Caco-2 (cell line): ENCODE measurements at regions of chr11 and their contacts with region 1.

Region 1: GRCh38 chr11:87097582-87097981 is 59.8 kb downstream of the TMEM135 start:
- DNase-seq: peak; percentile 87
- H3K4me3 ChIP-seq: no peak overlapping the region
- H3K4me3 Mint-ChIP-seq: no peak overlapping the region
- H3K27ac Mint-ChIP-seq: peak overlapping the region; percentile 26
- H3K4me1 ChIP-seq: peaks cover 12% of the 10 kb centered on the region
- H3K4me1 Mint-ChIP-seq: peaks cover 10% of the 10 kb centered on the region
- H3K27me3 ChIP-seq: no peaks in the 10 kb centered on the region
- H3K27me3 Mint-ChIP-seq: no peaks in the 10 kb centered on the region
- CTCF ChIP-seq: peak; percentile 96 to 98

Region 2: DNA sequence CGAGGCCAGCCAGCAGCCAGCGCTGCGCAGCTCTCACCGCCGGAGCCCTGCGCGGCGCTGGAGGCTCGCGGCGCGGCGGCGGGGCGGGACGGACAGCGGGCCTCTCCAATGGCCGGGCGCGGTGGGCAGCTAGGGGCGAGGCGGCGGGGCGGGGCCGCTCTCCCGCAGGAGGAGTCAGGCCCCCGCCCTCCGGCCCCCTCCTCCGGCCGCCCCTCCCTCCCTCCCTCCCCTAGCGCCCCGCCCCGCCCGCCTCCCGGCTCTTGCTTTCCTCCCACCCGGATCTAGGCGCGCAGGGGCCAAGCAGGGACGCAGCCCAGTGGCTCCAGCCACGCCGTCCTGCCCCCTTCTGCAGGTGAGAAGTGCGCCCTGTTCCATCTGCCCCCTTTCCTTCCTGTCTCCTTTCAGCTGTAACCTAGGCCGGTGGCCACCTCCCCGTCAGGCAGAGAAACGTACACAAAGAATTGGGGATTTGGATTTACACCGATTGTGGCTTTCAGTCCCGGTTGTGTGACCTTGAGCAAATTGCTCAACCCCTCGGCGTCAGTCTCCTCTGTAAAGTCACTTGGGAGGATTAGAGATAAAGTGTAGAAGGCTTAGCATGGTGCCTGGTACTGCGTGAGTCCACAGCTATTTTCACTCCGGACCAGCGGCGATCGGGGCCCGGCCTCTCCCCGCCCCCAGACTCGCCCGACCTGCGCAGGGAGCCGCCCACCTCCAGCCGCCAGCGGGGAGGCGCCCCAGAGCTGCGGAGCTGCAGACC is 142.0 kb before region 1 on chr11 and contains the start of gene FZD4:
- CTCF ChIA-PET with region 1: interaction called, 21 read pairs
- POLR2A ChIA-PET with region 1: no interaction called
- intact Hi-C with region 1: loop called (anchors 2 kb)
- DNase-seq: peak; percentile 96 to 99
- H3K4me3 ChIP-seq: peak within 1 kb of the TSS; percentile 94
- H3K4me3 Mint-ChIP-seq: peak within 1 kb of the TSS; percentile 93
- H3K27ac Mint-ChIP-seq: peak within 1 kb of the TSS; percentile 90
- H3K4me1 ChIP-seq: peaks cover 15% of the 10 kb centered on the region
- H3K4me1 Mint-ChIP-seq: peaks cover 22% of the 10 kb centered on the region
- H3K27me3 ChIP-seq: no peaks in the 10 kb centered on the region
- H3K27me3 Mint-ChIP-seq: no peaks in the 10 kb centered on the region
- CTCF ChIP-seq: peak; percentile 5 to 64
- total RNA-seq, gene FZD4: 60.6 and 78.4 TPM in 2 replicates

Region 3: GRCh38 chr11:86990515-86990914 is 107.1 kb before region 1 on chr11:
- CTCF ChIA-PET with region 1: interaction called, 17 read pairs
- POLR2A ChIA-PET with region 1: no interaction called
- intact Hi-C with region 1: loop called (anchors 1 kb)
- DNase-seq: peak; percentile 58 to 70
- H3K4me3 ChIP-seq: no peak overlapping the region
- H3K4me3 Mint-ChIP-seq: no peak overlapping the region
- H3K27ac Mint-ChIP-seq: peak overlapping the region; percentile 8
- H3K4me1 ChIP-seq: peaks cover 28% of the 10 kb centered on the region
- H3K4me1 Mint-ChIP-seq: peaks cover 37% of the 10 kb centered on the region
- H3K27me3 ChIP-seq: no peaks in the 10 kb centered on the region
- H3K27me3 Mint-ChIP-seq: no peaks in the 10 kb centered on the region
- CTCF ChIP-seq: no peak

Region 4: GRCh38 chr11:87037450-87038234 is 59.9 kb before region 1 on chr11 and contains the start of gene TMEM135:
- CTCF ChIA-PET with region 1: interaction called, 33 read pairs
- POLR2A ChIA-PET with region 1: interaction called, 9 read pairs
- intact Hi-C with region 1: loop called (anchors 2 kb)
- DNase-seq: peak; percentile 99 to 100
- H3K4me3 ChIP-seq: peak within 1 kb of the TSS; percentile 83
- H3K4me3 Mint-ChIP-seq: peak within 1 kb of the TSS; percentile 97
- H3K27ac Mint-ChIP-seq: peak within 1 kb of the TSS; percentile 81
- H3K4me1 ChIP-seq: peaks cover 11% of the 10 kb centered on the region
- H3K4me1 Mint-ChIP-seq: peaks cover 59% of the 10 kb centered on the region
- H3K27me3 ChIP-seq: no peaks in the 10 kb centered on the region
- H3K27me3 Mint-ChIP-seq: no peaks in the 10 kb centered on the region
- CTCF ChIP-seq: peak in 1 of 2 experiments; percentile 62
- total RNA-seq, gene TMEM135: 88.6 and 95.2 TPM in 2 replicates

Region 5: DNA sequence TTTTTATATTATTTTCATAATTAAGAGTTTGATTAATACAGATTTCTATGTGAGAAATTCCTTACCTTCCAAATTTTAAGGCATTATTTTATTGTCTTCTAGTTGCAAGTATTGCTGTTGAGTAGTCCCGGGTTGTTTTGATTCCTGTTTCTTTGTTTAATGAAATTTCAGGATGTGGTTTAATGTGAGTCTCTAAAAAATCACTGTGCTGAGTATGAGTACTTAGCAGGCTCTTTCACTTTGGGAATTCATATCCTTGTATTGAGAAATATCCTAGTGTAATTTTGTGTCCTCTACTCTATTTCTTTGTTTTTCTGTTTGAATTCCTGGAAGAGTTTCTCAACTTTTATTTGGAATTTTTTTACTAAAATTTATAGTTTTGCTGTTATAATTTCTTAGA is 53.4 kb after region 1 on chr11:
- CTCF ChIA-PET with region 1: no interaction called
- POLR2A ChIA-PET with region 1: no interaction called
- intact Hi-C with region 1: loop called (anchors 2 kb)
- DNase-seq: no peak
- H3K4me3 ChIP-seq: no peak overlapping the region
- H3K4me3 Mint-ChIP-seq: no peak overlapping the region
- H3K27ac Mint-ChIP-seq: no peak overlapping the region
- H3K4me1 ChIP-seq: peaks cover 9% of the 10 kb centered on the region
- H3K4me1 Mint-ChIP-seq: peaks cover 29% of the 10 kb centered on the region
- H3K27me3 ChIP-seq: no peaks in the 10 kb centered on the region
- H3K27me3 Mint-ChIP-seq: no peaks in the 10 kb centered on the region
- CTCF ChIP-seq: no peak

Region 6: DNA sequence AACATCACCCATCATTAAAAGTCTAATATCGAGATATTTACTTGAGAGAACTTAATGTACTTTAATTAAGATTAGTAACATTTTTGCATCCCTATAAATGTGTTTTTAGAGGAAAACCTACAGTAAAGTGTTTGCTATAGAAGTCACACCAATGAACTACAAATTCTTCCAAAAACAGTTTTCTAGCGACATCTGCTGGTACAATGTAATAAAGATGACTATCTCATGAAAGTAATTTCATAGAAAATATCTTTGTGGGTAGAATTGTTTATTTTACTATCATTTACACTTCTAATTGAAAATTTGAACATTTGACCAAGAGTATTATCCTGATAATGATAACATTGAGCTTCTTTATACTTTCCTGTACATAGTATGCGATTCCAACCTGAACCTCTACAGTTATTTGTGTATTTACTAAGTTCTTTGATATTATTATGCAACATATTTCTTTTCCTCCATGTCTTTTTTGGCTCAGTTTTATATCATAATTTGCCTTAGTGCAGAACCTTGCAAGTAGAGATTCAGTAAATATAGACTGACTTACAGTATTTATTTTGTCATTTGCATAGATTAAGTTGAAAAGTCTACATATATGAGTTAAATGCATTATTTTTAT is 192.8 kb after region 1 on chr11:
- CTCF ChIA-PET with region 1: interaction called, 7 read pairs
- POLR2A ChIA-PET with region 1: no interaction called
- intact Hi-C with region 1: loop called (anchors 1 kb)
- DNase-seq: peak in 1 of 2 experiments; percentile 76
- H3K4me3 ChIP-seq: no peak overlapping the region
- H3K4me3 Mint-ChIP-seq: no peak overlapping the region
- H3K27ac Mint-ChIP-seq: no peak overlapping the region
- H3K4me1 ChIP-seq: no peaks in the 10 kb centered on the region
- H3K4me1 Mint-ChIP-seq: peaks cover 5% of the 10 kb centered on the region
- H3K27me3 ChIP-seq: no peaks in the 10 kb centered on the region
- H3K27me3 Mint-ChIP-seq: no peaks in the 10 kb centered on the region
- CTCF ChIP-seq: peak; percentile 78 to 84

Region 7: GRCh38 chr11:88421530-88421929 is 1323.9 kb after region 1 on chr11:
- CTCF ChIA-PET with region 1: no interaction called
- POLR2A ChIA-PET with region 1: no interaction called
- intact Hi-C with region 1: no loop called
- DNase-seq: no peak
- H3K4me3 ChIP-seq: no peak overlapping the region
- H3K4me3 Mint-ChIP-seq: no peak overlapping the region
- H3K27ac Mint-ChIP-seq: no peak overlapping the region
- H3K4me1 ChIP-seq: no peaks in the 10 kb centered on the region
- H3K4me1 Mint-ChIP-seq: peaks cover 20% of the 10 kb centered on the region
- H3K27me3 ChIP-seq: no peaks in the 10 kb centered on the region
- H3K27me3 Mint-ChIP-seq: no peaks in the 10 kb centered on the region
- CTCF ChIP-seq: no peak